Dendritic cell treated with granulocyte-macrophage colony-stimulating factor and Interleukin-4, amounts not matched to agents 40 ng/mL and 50 ng/mL, for 4 days (primary cell): ENCODE measurements at regions of chr22 and their contacts with region 1.

Region 1: DNA sequence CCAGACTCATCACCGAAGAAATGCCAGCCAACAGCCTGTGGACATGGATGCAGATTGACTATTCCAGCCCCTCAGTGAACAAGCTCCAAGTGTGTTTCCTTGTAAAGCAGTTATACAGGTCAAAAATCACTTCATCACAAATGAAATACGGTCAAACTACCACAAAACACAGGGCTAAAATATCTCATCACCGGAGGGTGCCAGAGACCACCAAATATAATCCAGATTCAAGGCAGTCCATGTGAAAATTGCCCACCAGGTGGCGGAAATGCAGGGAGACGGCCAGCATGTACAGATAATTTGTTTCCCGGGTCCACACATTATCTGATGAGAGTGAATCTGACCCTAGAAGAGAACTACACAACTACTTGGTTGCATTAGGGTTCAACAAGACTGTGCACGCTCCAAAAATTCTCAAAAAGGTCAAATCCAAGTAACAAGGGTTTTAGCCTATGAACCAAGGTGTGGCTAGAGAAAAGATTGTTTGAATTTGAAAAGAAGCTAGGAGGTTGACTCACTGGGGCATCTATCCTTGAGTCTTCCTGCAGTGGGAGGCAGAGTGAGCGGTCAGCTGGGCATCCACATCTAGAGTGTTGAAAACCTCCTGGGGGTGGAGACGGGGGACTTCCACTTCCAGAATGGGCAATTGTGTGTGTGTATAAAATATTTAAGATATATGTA is 71.7 kb downstream of the IGLL5 start:
- H3K4me3 Mint-ChIP-seq: no peak overlapping the region
- H3K27ac Mint-ChIP-seq: no peak overlapping the region
- H3K4me1 Mint-ChIP-seq: peaks cover 11% of the 10 kb centered on the region
- H3K27me3 Mint-ChIP-seq: peaks cover 31% of the 10 kb centered on the region

Region 2: DNA sequence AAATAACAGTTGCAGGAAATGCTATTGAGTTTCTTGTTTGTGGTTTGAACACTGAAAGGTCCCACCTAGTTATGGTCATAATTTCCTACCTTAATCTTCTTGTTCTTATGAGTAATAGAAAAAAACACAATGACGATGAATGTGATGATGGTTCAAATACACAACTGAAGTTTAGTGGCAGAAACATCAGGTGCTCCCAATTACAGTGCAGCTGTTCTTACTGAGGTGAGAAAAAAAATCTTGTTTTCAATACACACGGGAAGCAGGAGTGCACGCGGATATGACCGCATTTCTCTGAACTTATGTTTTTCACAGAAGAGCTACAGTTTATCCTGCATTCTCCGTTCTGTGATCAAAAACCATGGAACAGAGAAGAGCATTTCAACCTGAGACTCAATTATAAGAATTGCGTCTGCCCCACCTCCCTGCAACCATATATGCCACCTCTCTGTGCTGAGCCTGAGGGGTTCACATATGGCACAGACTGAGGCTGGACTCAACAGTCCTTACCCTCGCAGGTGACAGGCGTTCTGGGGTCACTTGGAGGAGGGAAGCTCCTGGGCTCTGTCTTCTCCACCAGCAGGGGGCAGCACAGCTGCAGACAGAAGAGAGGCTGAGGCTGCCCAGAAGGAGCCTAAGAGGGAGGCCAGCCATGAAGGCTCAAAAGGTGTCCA is 171.4 kb before region 1 on chr22:
- intact Hi-C with region 1: loop called (anchors 5 kb)
- H3K4me3 Mint-ChIP-seq: no peak overlapping the region
- H3K27ac Mint-ChIP-seq: no peak overlapping the region
- H3K4me1 Mint-ChIP-seq: peaks cover 9% of the 10 kb centered on the region
- H3K27me3 Mint-ChIP-seq: peaks cover 14% of the 10 kb centered on the region

Region 3: DNA sequence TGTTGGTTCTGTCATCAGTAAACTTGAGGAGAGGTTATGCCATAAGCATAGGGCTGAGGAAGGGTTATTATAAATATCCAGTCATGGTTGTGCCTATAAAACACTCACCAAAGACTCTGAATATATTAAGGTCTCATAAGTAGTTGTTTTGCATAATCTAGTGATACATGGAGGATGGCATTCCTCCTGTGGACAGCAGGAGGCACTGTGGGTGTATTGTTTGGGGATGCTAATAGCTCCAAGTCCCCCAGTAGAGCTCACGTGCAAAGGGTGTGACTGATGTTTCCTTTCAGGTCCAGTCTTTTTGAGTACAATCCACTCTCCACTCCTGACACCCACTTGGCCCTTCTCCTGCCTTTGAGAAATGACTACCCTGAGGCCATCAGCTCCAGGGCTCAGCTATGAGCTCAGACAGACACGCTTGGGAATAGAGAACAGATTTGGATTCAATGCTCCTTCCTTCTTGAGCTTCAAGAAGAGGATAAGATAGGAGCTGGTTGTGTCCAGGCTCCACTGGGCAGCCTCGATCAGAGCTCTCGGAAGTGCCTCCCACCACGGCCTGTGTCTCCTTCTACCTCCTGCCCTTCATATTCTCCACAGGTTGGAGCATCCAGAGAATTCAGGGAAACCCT is 156.8 kb before region 1 on chr22:
- intact Hi-C with region 1: loop called (anchors 1 kb)
- H3K4me3 Mint-ChIP-seq: no peak overlapping the region
- H3K27ac Mint-ChIP-seq: no peak overlapping the region
- H3K4me1 Mint-ChIP-seq: no peaks in the 10 kb centered on the region
- H3K27me3 Mint-ChIP-seq: no peaks in the 10 kb centered on the region

Region 4: GRCh38 chr22:22848364-22848866 is 110.9 kb before region 1 on chr22:
- intact Hi-C with region 1: loop called (anchors 2 kb)
- H3K4me3 Mint-ChIP-seq: no peak overlapping the region
- H3K27ac Mint-ChIP-seq: no peak overlapping the region
- H3K4me1 Mint-ChIP-seq: peaks cover 7% of the 10 kb centered on the region
- H3K27me3 Mint-ChIP-seq: peaks cover under 1% of the 10 kb centered on the region

Region 5: GRCh38 chr22:22884010-22884887 is 75.0 kb before region 1 on chr22:
- intact Hi-C with region 1: loop called (anchors 1 kb)
- H3K4me3 Mint-ChIP-seq: no peak overlapping the region
- H3K27ac Mint-ChIP-seq: peak overlapping the region; percentile 67
- H3K4me1 Mint-ChIP-seq: peaks cover 42% of the 10 kb centered on the region
- H3K27me3 Mint-ChIP-seq: peaks cover 4% of the 10 kb centered on the region

Region 6: DNA sequence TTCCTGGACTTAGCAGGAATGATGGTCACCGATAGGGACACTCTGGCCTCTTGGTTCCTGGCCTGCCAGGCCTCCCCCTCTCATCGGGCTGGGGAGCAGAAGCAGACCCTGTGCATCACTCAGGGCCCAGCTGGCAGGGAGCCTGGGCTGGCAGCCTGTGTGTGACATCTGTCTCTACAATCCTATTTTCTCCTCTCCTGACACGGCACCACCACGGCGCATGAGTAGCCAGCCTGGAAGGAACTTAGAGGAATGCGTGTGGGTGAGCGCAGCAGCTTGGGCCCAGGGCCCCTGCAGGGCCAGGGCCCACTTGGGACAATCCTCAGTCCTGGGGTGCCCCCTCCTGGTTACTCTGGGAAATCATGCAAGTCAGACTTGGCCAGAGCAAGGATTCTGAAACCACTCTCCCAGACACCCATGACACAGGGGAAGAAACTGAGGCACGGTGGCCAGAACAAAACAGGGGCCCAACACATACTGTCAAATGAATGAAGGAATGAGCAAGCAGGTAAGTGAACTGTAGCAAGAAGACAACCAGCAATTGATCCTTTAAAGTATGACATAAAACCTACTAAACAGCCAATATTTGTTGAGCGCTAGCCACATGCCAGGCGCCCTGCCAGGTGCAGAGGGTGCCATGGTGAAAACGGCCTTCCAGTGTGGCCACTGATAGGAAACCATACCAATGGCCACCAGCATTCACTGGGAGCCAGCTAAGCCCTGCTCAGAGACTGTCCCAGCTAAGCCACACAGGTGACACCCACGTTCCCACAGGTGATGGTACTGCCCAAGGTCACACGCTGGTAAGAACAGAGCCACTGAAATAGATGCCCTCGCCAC is 169.2 kb after region 1 on chr22:
- intact Hi-C with region 1: loop called (anchors 1 kb)
- H3K4me3 Mint-ChIP-seq: no peak overlapping the region
- H3K27ac Mint-ChIP-seq: no peak overlapping the region
- H3K4me1 Mint-ChIP-seq: no peaks in the 10 kb centered on the region
- H3K27me3 Mint-ChIP-seq: no peaks in the 10 kb centered on the region